ENCODE measurements at regions of chr1 and their contacts with region 1.

Region 1: GRCh38 chr1:156054500-156055280 is at the start of gene LAMTOR2:
- DNase-seq: peak; percentile 86 to 96 (median 93)
- ATAC-seq: peak; percentile 87
- H3K4me3 ChIP-seq: peak within 1 kb of the TSS; percentile 78
- H3K4me3 Mint-ChIP-seq: peak within 1 kb of the TSS; percentile 92 to 100 (median 96)
- H3K27ac ChIP-seq: peak within 1 kb of the TSS; percentile 82
- H3K27ac Mint-ChIP-seq: peak within 1 kb of the TSS; percentile 85 to 98 (median 91)
- H3K4me1 ChIP-seq: peaks cover 9 to 17% of the 10 kb centered on the region in 2 donors
- H3K4me1 Mint-ChIP-seq: peaks cover 16 to 45% (median 35%) of the 10 kb centered on the region in 7 donors
- H3K27me3 ChIP-seq: no peaks in the 10 kb centered on the region
- H3K27me3 Mint-ChIP-seq: no peaks in the 10 kb centered on the region
- total RNA-seq, gene LAMTOR2: 13.3 to 66.1 (median 27.9) TPM

Region 2: DNA sequence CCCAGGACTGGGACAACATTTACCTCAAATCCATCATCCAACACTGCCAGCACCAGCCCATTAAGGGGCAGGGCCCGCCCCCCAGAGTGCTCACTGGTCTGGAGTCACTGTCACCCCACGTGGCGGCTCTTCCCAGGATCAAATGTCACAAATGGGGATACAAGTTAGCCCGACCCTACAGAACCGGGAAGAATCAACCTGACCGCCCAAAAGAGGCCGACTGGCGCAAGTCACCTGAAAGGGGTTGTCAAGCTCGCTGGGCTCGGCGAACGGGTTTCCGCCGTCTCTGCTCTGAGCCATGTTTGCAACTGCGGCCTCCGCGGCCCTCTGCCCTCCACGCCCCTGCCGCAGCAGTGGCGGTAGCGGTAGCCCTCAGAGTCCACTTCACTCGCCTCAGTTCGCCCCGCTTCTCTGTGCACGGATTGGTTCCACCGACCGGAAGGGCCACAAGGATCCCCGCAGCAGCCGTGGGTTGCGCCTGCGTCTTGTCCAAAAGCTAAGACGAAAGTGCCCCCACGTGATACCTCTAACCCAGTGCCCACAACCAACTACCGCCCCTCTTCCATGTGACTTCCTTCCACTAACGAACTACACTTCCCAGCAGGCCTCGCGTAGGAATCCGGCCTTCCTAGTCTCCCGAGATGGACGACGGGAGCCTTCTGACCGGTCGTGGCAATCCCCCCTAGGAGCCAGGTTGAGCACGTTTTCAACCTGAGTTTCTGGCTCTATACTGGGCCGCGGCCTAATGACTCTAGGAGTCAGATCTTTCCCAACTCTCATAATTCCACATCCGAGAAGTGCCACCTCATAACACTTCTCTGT is 792.6 kb before region 1 on chr1 and contains the start of gene SCAMP3:
- CTCF ChIA-PET with region 1: no interaction called
- POLR2A ChIA-PET with region 1: no interaction called
- intact Hi-C with region 1: loop called in 1 of 2 experiments (anchors 10 kb)
- DNase-seq: peak; percentile 52 to 89 (median 79)
- ATAC-seq: peak; percentile 99
- H3K4me3 ChIP-seq: peak within 1 kb of the TSS; percentile 88
- H3K4me3 Mint-ChIP-seq: peak within 1 kb of the TSS; percentile 81 to 100 (median 98)
- H3K27ac ChIP-seq: peak within 1 kb of the TSS; percentile 87
- H3K27ac Mint-ChIP-seq: peak within 1 kb of the TSS; percentile 89 to 98 (median 96)
- H3K4me1 ChIP-seq: peaks cover 18 to 19% of the 10 kb centered on the region in 2 donors
- H3K4me1 Mint-ChIP-seq: peaks cover 22 to 42% (median 33%) of the 10 kb centered on the region in 7 donors
- H3K27me3 ChIP-seq: no peaks in the 10 kb centered on the region
- H3K27me3 Mint-ChIP-seq: no peaks in the 10 kb centered on the region
- total RNA-seq, gene SCAMP3: 50.8 to 118 (median 100) TPM

Region 3: GRCh38 chr1:155562581-155563376 is 491.9 kb before region 1 on chr1 and contains the start of gene ASH1L:
- CTCF ChIA-PET with region 1: no interaction called
- POLR2A ChIA-PET with region 1: no interaction called
- intact Hi-C with region 1: loop called in 1 of 2 experiments (anchors 5 kb)
- DNase-seq: peak; percentile 85 to 94 (median 90)
- ATAC-seq: peak; percentile 90
- H3K4me3 ChIP-seq: peak within 1 kb of the TSS; percentile 100
- H3K4me3 Mint-ChIP-seq: peak within 1 kb of the TSS; percentile 91 to 100 (median 98)
- H3K27ac ChIP-seq: peak within 1 kb of the TSS; percentile 86
- H3K27ac Mint-ChIP-seq: peak within 1 kb of the TSS; percentile 95 to 100 (median 98)
- H3K4me1 ChIP-seq: peaks cover 26 to 32% of the 10 kb centered on the region in 2 donors
- H3K4me1 Mint-ChIP-seq: peaks cover 15 to 56% (median 47%) of the 10 kb centered on the region in 7 donors
- H3K27me3 ChIP-seq: no peaks in the 10 kb centered on the region
- H3K27me3 Mint-ChIP-seq: peaks cover 0 to 4% (median 0%) of the 10 kb centered on the region in 5 donors
- total RNA-seq, gene ASH1L: 57.2 to 109 (median 95.1) TPM

Region 4: GRCh38 chr1:155911156-155912055 is 143.3 kb before region 1 on chr1 and contains the start of gene RIT1:
- CTCF ChIA-PET with region 1: interaction called, 3 read pairs
- POLR2A ChIA-PET with region 1: no interaction called
- intact Hi-C with region 1: loop called (anchors 1 kb)
- DNase-seq: peak; percentile 68 to 85 (median 76)
- ATAC-seq: peak; percentile 99
- H3K4me3 ChIP-seq: peak within 1 kb of the TSS; percentile 73
- H3K4me3 Mint-ChIP-seq: peak within 1 kb of the TSS; percentile 85 to 99 (median 96)
- H3K27ac ChIP-seq: peak within 1 kb of the TSS; percentile 80
- H3K27ac Mint-ChIP-seq: peak within 1 kb of the TSS; percentile 90 to 99 (median 96)
- H3K4me1 ChIP-seq: peaks cover 5 to 17% of the 10 kb centered on the region in 2 donors
- H3K4me1 Mint-ChIP-seq: peaks cover 11 to 38% (median 21%) of the 10 kb centered on the region in 7 donors
- H3K27me3 ChIP-seq: no peaks in the 10 kb centered on the region
- H3K27me3 Mint-ChIP-seq: no peaks in the 10 kb centered on the region
- total RNA-seq, gene RIT1: 34.0 to 83.9 (median 41.4) TPM

Region 5: DNA sequence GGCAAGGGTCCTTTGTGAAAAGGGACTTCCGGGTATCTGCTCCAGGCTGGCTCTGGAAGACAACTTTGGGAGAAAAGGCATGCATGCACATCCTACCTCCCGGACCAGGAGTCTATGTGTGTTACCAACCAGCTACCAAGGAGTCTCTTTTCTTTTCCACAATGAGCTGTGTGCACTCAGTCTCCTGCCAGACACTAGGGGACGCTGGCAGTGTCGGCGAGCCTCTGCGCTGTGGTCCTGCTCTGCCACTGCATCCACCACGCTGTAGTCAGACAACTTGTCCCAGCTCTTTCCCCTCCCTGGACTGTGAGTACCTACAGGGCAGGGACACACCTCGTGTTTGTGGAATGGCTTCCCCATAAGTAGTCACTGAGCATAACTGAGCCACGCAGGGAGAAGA is 28.8 kb before region 1 on chr1:
- CTCF ChIA-PET with region 1: no interaction called
- POLR2A ChIA-PET with region 1: interaction called, 11 read pairs
- intact Hi-C with region 1: loop called (anchors 1 kb)
- DNase-seq: peak in 4 of 9 donors; percentile 13 to 27 (median 18)
- ATAC-seq: peak; percentile 80
- H3K4me3 ChIP-seq: no peak overlapping the region
- H3K4me3 Mint-ChIP-seq: peak overlapping the region in 1 of 10 donors; percentile 55
- H3K27ac ChIP-seq: no peak overlapping the region
- H3K27ac Mint-ChIP-seq: no peak overlapping the region
- H3K4me1 ChIP-seq: peaks cover 0 to 3% of the 10 kb centered on the region in 2 donors
- H3K4me1 Mint-ChIP-seq: peaks cover 6 to 22% (median 19%) of the 10 kb centered on the region in 7 donors
- H3K27me3 ChIP-seq: no peaks in the 10 kb centered on the region
- H3K27me3 Mint-ChIP-seq: peaks cover 0 to 17% (median 0%) of the 10 kb centered on the region in 5 donors

Region 6: GRCh38 chr1:156042828-156043227 is 11.9 kb before region 1 on chr1:
- CTCF ChIA-PET with region 1: no interaction called
- POLR2A ChIA-PET with region 1: no interaction called
- intact Hi-C with region 1: no loop called
- DNase-seq: no peak
- ATAC-seq: no peak
- H3K4me3 ChIP-seq: no peak overlapping the region
- H3K4me3 Mint-ChIP-seq: no peak overlapping the region
- H3K27ac ChIP-seq: no peak overlapping the region
- H3K27ac Mint-ChIP-seq: peak overlapping the region in 1 of 9 donors; percentile 25
- H3K4me1 ChIP-seq: no peaks in the 10 kb centered on the region
- H3K4me1 Mint-ChIP-seq: peaks cover 0 to 12% (median 0%) of the 10 kb centered on the region in 7 donors
- H3K27me3 ChIP-seq: no peaks in the 10 kb centered on the region
- H3K27me3 Mint-ChIP-seq: no peaks in the 10 kb centered on the region

Region 7: GRCh38 chr1:156282479-156283222 is 228.0 kb after region 1 on chr1 and contains the start of gene SMG5:
- CTCF ChIA-PET with region 1: no interaction called
- POLR2A ChIA-PET with region 1: interaction called, 3 read pairs
- intact Hi-C with region 1: loop called (anchors 1 kb)
- DNase-seq: peak; percentile 89 to 98 (median 96)
- ATAC-seq: peak; percentile 95
- H3K4me3 ChIP-seq: peak within 1 kb of the TSS; percentile 93
- H3K4me3 Mint-ChIP-seq: peak within 1 kb of the TSS; percentile 85 to 99 (median 94)
- H3K27ac ChIP-seq: peak within 1 kb of the TSS; percentile 89
- H3K27ac Mint-ChIP-seq: peak within 1 kb of the TSS; percentile 89 to 98 (median 95)
- H3K4me1 ChIP-seq: peaks cover 15 to 22% of the 10 kb centered on the region in 2 donors
- H3K4me1 Mint-ChIP-seq: peaks cover 29 to 51% (median 39%) of the 10 kb centered on the region in 7 donors
- H3K27me3 ChIP-seq: no peaks in the 10 kb centered on the region
- H3K27me3 Mint-ChIP-seq: peaks cover 0 to 3% (median 0%) of the 10 kb centered on the region in 5 donors
- total RNA-seq, gene SMG5: 65.7 to 74.0 (median 69.4) TPM

Region 8: DNA sequence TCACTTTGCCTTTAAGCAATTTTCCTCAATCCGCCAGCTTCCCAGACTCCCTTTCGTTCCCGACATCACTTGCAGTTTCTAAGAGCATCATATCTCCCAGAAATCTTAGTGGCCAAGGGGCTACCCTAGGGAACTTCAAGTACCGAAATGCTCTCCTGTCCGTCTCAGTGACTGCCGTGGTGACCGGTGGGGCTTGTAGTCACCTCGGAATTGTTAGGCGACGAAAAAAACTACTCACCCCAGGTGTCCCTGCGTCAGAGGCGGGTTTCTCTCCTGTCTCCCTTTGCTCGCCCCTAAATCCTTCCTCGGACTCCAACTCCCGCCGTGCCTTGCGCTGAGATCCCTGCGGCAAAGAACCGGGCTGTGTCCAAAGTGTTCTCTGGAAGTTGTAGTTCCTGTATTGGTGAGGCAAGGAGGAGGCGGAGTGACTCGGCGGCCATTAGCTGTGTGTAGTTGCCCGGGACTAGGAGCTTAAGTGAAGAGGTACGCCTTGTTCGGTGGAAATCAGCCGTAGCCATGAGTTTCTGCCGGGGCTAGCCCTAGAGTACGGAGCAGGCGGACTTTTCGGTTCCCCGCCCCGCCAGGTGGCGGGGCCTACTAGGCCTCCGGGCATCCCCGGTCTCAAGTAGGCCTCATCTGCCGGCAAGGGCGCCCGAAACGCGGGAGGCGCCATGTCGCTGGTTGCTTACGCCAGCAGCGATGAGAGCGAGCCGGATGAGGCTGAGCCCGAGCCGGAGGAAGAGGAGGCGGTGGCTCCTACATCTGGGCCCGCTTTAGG is 712.6 kb after region 1 on chr1 and contains the start of gene PRCC:
- CTCF ChIA-PET with region 1: no interaction called
- POLR2A ChIA-PET with region 1: no interaction called
- intact Hi-C with region 1: loop called in 1 of 2 experiments (anchors 1 kb)
- DNase-seq: peak; percentile 83 to 100 (median 98)
- ATAC-seq: peak; percentile 94
- H3K4me3 ChIP-seq: peak within 1 kb of the TSS; percentile 89
- H3K4me3 Mint-ChIP-seq: no peak within 1 kb of the TSS
- H3K27ac ChIP-seq: peak within 1 kb of the TSS; percentile 98
- H3K27ac Mint-ChIP-seq: peak within 1 kb of the TSS in 3 of 9 donors; percentile 13 to 91 (median 88)
- H3K4me1 ChIP-seq: peaks cover 23 to 36% of the 10 kb centered on the region in 2 donors
- H3K4me1 Mint-ChIP-seq: peaks cover 35 to 46% (median 37%) of the 10 kb centered on the region in 7 donors
- H3K27me3 ChIP-seq: no peaks in the 10 kb centered on the region
- H3K27me3 Mint-ChIP-seq: no peaks in the 10 kb centered on the region
- total RNA-seq, gene PRCC: 53.2 to 88.9 (median 61.7) TPM